ENCODE measurements at regions of chr13 and their contacts with region 1.

Region 1: GRCh38 chr13:30802953-30803478 is 67.7 kb downstream of the ALOX5AP start:
- DNase-seq: peak; percentile 94
- H3K4me3 Mint-ChIP-seq: peak overlapping the region; percentile 65
- H3K27ac Mint-ChIP-seq: no peak overlapping the region
- H3K4me1 Mint-ChIP-seq: peaks cover 18% of the 10 kb centered on the region
- H3K27me3 Mint-ChIP-seq: no peaks in the 10 kb centered on the region

Region 2: DNA sequence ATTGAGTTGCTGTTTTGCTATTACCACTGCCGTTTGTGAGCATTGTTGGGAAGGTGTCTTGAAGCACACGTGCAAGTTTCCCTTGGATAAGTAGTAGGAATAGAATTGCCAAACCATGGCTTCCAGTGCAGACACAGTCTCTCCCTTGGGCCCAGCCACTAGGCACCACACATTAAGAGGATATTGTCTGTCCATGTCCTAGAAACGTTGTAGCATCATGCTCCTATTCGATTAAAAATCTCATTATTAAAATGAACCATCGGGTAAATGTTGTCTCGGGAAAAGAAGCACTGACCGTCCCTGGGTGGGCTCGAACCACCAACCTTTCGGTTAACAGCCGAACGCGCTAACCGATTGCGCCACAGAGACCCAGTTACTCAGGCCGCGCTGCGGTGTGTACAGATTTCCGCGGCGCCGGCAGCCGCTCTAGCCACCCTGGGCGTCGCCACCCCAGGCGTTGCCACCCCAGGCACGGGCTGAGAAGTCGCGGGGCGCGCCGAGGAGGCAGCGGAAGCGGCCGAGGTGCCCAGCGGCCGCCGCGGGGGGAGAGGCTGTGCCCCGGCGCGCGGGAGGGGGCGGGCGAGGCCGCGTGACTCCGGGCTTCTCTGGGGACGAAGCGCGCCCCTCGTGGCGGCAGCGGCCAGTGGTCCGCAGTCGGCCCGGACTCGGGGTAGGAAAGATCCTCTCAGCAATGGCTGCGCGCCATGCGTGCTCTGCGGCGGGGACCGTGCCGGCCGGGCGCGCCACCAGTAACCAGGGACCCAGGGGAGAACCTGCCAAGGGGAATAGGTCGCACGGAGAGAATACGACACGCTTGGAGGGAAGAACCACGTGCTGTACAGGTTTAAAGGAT is 129.1 kb before region 1 on chr13:
- intact Hi-C with region 1: loop called (anchors 1 kb)
- DNase-seq: peak; percentile 96
- H3K4me3 Mint-ChIP-seq: peak overlapping the region; percentile 86
- H3K27ac Mint-ChIP-seq: peak overlapping the region; percentile 80
- H3K4me1 Mint-ChIP-seq: peaks cover 9% of the 10 kb centered on the region
- H3K27me3 Mint-ChIP-seq: peaks cover 25% of the 10 kb centered on the region

Region 3: GRCh38 chr13:30679483-30680330 is 123.3 kb before region 1 on chr13:
- intact Hi-C with region 1: loop called (anchors 1 kb)
- DNase-seq: peak; percentile 78
- H3K4me3 Mint-ChIP-seq: no peak overlapping the region
- H3K27ac Mint-ChIP-seq: no peak overlapping the region
- H3K4me1 Mint-ChIP-seq: peaks cover 8% of the 10 kb centered on the region
- H3K27me3 Mint-ChIP-seq: peaks cover 23% of the 10 kb centered on the region

Region 4: DNA sequence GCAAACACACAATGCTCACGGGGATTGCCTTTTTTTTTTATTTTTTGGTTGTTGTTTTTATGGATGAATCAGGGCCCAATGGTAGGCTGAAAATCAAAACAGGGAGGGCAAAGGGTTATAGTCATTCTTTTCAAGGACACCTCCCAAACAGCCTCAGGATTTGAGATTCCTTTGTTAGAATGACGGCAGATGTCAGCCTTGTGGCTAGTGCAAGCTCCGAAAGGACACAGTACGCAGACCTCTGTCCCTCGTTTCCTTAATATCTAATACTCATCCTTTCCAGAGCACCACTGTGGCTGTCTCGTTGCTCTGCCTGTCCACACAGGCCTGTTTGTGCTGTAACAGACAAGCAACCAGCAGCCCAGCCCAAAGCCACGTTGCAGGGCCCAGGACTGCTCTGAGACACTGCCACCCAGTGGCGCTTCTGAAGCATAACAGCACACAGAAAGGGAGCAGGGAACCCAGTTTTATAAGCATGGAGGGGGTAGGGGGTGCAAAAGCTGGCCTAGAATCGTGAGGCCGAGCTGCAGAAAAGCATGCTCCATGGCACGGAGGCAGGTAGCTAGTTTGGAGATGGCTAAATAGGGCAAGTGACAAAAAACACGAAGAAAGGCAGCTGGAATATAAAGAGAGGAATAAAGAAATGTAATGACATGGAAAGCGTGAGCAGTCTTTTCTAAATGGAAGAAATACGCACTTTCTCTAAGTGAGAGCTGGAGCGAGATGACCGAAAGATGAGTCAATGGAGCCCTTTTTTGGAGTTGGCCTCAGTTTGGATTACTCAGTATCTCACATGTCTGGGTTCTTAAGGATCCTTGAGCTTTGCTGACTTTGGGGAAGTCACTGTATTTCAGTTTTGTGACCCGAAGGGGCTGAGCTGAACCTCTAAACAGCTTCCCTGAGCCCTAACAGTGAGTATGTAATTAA is 62.4 kb after region 1 on chr13:
- intact Hi-C with region 1: loop called (anchors 5 kb)
- DNase-seq: peak; percentile 83
- H3K4me3 Mint-ChIP-seq: no peak overlapping the region
- H3K27ac Mint-ChIP-seq: no peak overlapping the region
- H3K4me1 Mint-ChIP-seq: peaks cover 8% of the 10 kb centered on the region
- H3K27me3 Mint-ChIP-seq: peaks cover 6% of the 10 kb centered on the region

Measured in activated CD4-positive, alpha-beta T cell treated with anti-CD3 and anti-CD28 coated beads, Interleukin-2, amount 10 ng/mL, durations not matched to agents 24 days and 14 days (primary cell).